IMR-90 (cell line): ENCODE measurements at regions of chr17 and their contacts with region 1.

Region 1: DNA sequence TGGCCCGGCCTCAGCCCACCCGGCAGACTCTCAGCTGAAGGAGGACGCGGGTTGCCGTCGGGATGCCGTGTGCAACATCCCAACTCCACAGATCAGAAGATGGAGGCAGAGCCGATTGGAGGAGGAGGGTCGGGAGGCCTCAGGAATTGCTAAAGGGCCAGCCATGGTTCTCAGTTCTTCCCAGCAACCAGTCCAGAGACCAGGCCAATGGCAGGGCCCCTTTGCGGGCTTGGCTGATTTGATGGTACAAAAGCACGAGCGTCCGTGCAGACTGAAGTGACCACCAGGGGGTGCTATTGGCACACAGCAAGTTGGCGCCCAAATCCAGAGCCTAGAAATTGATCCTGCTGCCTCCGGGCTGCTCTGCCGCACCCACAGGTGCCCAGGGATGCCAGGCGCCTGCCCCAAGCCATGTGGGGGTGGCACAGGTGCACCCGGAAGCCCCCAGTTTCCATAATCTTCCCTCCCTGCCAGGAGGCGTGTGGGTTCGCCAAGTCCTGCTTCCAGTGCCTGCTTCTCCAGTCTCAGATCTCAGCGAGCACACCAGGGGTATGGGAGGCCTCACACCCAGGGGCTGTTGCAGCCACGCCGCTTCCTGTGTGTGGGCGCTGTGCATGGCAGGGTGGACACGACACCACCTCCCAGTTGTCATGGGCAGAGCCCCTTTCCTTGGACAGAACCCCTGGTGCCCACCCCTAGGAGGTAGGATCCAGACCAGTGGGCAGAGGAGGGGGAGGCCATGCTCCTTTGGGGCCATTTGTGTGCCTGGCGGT is 7.1 kb upstream of the TEX19 start:
- DNase-seq: peak; percentile 84
- ATAC-seq: peak; percentile 93
- H3K4me3 ChIP-seq: no peak overlapping the region
- H3K27ac ChIP-seq: no peak overlapping the region
- H3K4me1 ChIP-seq: peaks cover 5% of the 10 kb centered on the region; the same call in 1 of the 2 replicates
- H3K27me3 ChIP-seq: peaks cover 29% of the 10 kb centered on the region
- CTCF ChIP-seq: peak; percentile 93
- POLR2A ChIP-seq: 0 out of 2 replicates have a peak, but pooled peaks have one; percentile 26
- RAD21 ChIP-seq: peak; percentile 94

Region 2: GRCh38 chr17:82407255-82407654 is 55.4 kb after region 1 on chr17:
- CTCF ChIA-PET with region 1: no interaction called
- POLR2A ChIA-PET with region 1: no interaction called
- dilution Hi-C with region 1: no loop called
- in situ Hi-C with region 1: loop called (anchors 5 kb)
- intact Hi-C with region 1: no loop called
- DNase-seq: peak; percentile 13
- ATAC-seq: no peak
- H3K4me3 ChIP-seq: no peak overlapping the region
- H3K27ac ChIP-seq: no peak overlapping the region
- H3K4me1 ChIP-seq: no peaks in the 10 kb centered on the region
- H3K27me3 ChIP-seq: no peaks in the 10 kb centered on the region
- CTCF ChIP-seq: no peak
- POLR2A ChIP-seq: no peak
- RAD21 ChIP-seq: no peak

Region 3: DNA sequence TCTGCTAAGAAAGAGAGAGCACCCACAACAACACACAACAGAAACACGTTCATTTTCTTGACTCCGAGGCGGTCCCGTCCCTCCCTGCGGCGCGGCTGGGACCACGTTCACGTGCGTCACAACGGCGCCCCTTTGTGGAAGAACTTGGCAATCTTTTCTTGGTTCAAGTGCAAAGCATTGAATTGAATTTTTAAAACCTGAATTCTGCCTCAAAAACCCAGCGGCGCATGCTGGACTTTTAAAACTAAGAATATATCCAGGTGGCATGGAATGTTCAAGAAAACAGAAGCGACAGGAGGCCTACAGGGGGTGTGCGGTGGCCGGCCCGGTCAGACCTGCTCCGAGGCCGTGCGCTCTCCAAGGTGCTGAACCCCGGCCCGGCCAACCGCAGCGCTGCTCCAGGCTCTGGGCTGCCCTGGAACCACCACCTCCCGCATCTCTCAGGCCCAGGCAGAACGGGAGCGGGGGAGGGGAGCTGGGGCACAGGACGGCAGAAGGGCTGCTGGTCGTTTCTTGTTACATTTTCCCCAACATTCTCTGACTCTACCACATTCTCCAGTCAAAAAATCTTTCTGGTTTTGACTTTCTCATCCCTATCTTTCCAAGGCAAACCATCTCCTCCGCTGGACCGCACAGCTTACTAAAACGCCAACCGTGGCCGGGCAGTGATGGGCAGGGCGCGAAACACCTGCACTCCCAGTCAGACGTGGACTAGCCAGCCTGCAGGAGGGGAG is 62.8 kb after region 1 on chr17:
- CTCF ChIA-PET with region 1: no interaction called
- POLR2A ChIA-PET with region 1: no interaction called
- dilution Hi-C with region 1: no loop called
- in situ Hi-C with region 1: loop called (anchors 5 kb)
- intact Hi-C with region 1: loop called (anchors 1 kb)
- DNase-seq: peak; percentile 50
- ATAC-seq: peak; percentile 61
- H3K4me3 ChIP-seq: no peak overlapping the region
- H3K27ac ChIP-seq: no peak overlapping the region
- H3K4me1 ChIP-seq: no peaks in the 10 kb centered on the region
- H3K27me3 ChIP-seq: no peaks in the 10 kb centered on the region
- CTCF ChIP-seq: peak; percentile 60
- POLR2A ChIP-seq: no peak
- RAD21 ChIP-seq: peak; percentile 73

Region 4: DNA sequence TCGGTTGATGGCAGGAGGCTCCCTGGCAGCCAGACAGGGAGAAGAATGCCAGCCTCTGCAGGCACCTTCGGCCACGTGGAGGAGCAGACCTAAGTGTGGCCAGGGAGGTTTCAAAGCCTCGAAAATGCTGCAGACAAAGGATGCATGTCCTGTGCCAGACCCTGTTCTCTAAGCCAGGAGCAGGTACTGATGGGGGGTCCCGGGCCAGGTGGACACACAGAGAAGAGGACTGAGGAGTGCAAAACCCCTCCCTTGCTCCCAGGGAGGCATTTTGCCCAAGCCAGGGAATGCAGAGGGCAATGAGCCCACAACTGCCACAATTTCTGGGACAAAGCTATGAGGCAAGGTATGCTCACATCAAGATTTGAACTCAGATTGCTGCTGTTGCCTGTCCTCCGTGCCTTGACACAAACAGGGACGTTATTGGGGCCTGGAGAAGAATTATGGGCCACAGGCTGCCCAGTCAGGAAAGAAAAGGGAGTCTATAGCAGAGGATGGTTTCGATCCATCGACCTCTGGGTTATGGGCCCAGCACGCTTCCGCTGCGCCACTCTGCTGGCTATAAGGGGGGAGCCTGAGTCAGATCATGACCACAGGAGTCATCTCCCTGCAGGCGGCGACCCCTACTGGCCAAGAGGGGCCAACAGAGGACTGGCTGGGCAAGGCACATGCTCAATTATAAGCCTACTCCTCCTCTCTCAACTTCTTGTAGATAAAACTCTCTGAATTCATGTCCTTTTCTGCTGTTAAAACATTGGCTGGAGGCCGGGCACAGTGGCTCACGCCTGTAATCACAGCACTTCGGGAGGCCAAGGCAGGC is 142.5 kb after region 1 on chr17:
- CTCF ChIA-PET with region 1: no interaction called
- POLR2A ChIA-PET with region 1: no interaction called
- dilution Hi-C with region 1: no loop called
- in situ Hi-C with region 1: no loop called
- intact Hi-C with region 1: loop called (anchors 1 kb)
- DNase-seq: peak; percentile 97
- ATAC-seq: peak; percentile 84
- H3K4me3 ChIP-seq: no peak overlapping the region
- H3K27ac ChIP-seq: no peak overlapping the region
- H3K4me1 ChIP-seq: peaks cover 11% of the 10 kb centered on the region
- H3K27me3 ChIP-seq: no peaks in the 10 kb centered on the region
- CTCF ChIP-seq: peak; percentile 97
- POLR2A ChIP-seq: no peak
- RAD21 ChIP-seq: no peak; the same call in 1 of the 2 replicates

Region 5: DNA sequence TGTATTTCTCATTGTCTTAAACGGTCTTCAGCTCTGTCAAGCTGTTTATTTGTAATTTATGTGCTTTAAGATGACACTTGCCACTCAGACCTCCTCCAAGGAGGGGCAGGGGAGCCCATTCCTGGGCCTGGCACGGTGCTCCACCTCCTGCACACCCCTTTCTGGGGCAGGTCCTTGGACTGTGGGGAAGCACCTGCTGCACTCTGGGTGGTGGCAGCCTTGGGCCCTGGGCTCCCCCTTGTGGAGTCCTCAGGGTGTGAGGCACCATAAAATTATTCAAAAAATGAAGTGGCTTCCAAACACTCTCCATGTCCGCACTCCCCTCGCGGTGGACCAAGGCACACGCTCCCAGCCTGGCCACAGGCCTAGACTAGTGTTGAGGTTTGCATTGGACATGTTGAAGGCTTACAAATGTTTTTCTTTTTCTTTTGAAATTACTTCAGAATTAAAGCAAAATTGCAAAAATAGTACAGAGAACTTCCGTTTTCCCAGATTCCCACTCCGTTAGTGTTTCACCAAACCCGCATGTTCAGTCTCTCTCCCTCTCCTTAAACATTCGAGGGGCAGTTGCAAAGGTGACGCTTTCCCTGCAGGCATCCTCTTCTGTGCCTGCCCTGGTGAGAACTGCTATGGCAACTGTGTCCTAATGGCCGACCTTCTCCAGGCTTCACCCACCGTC is 200.0 kb after region 1 on chr17:
- CTCF ChIA-PET with region 1: no interaction called
- POLR2A ChIA-PET with region 1: no interaction called
- dilution Hi-C with region 1: no loop called
- in situ Hi-C with region 1: loop called (anchors 10 kb)
- intact Hi-C with region 1: loop called (anchors 1 kb)
- DNase-seq: peak; percentile 70
- ATAC-seq: peak; percentile 93
- H3K4me3 ChIP-seq: no peak overlapping the region
- H3K27ac ChIP-seq: no peak overlapping the region
- H3K4me1 ChIP-seq: peaks cover 4% of the 10 kb centered on the region
- H3K27me3 ChIP-seq: no peaks in the 10 kb centered on the region
- CTCF ChIP-seq: peak; percentile 84
- POLR2A ChIP-seq: no peak
- RAD21 ChIP-seq: peak; percentile 86

Region 6: GRCh38 chr17:82775001-82775823 is 423.3 kb after region 1 on chr17:
- CTCF ChIA-PET with region 1: no interaction called
- POLR2A ChIA-PET with region 1: no interaction called
- dilution Hi-C with region 1: no loop called
- in situ Hi-C with region 1: loop called (anchors 10 kb)
- intact Hi-C with region 1: no loop called
- DNase-seq: no peak
- ATAC-seq: peak; percentile 49
- H3K4me3 ChIP-seq: no peak overlapping the region
- H3K27ac ChIP-seq: no peak overlapping the region
- H3K4me1 ChIP-seq: peaks cover 5% of the 10 kb centered on the region
- H3K27me3 ChIP-seq: no peaks in the 10 kb centered on the region
- CTCF ChIP-seq: peak; percentile 59
- POLR2A ChIP-seq: no peak
- RAD21 ChIP-seq: peak; percentile 43